Tibial artery (tissue), 4 donors: ENCODE measurements at regions of chr1 and their contacts with region 1.

Region 1: GRCh38 chr1:201447911-201448871 is 20.8 kb downstream of the PHLDA3 start:
- DNase-seq: peak; percentile 71 to 87
- H3K4me3 ChIP-seq: no peak overlapping the region
- H3K27ac ChIP-seq: no peak overlapping the region
- H3K4me1 ChIP-seq: peaks cover 0 to 25% (median 16%) of the 10 kb centered on the region in 4 donors
- H3K27me3 ChIP-seq: no peaks in the 10 kb centered on the region
- CTCF ChIP-seq: peak; percentile 86 to 87

Region 2: DNA sequence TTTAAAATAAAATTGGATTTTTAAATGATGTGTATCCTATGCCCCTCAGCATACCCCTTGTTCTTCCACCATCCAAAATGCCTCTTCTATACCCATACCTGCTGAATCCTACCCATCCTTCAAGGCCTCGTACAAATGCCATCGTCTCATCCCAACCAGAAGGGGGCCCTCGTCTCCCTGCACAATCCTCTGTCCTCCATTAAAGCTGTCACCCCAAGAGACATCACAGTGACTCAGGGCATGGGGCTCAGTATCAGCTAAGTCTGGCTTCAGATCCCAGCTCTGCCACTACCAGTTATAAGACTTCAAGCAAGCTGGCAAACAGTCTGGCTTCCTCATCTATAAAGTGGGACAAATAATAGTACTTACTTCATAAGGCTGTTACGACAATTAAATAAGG is 233.7 kb before region 1 on chr1:
- intact Hi-C with region 1: no loop called
- DNase-seq: peak in 1 of 2 donors; percentile 25
- H3K4me3 ChIP-seq: no peak overlapping the region
- H3K27ac ChIP-seq: no peak overlapping the region
- H3K4me1 ChIP-seq: no peaks in the 10 kb centered on the region
- H3K27me3 ChIP-seq: no peaks in the 10 kb centered on the region
- CTCF ChIP-seq: no peak

Region 3: GRCh38 chr1:201299968-201300367 is 148.2 kb before region 1 on chr1:
- intact Hi-C with region 1: no loop called
- DNase-seq: no peak
- H3K4me3 ChIP-seq: no peak overlapping the region
- H3K27ac ChIP-seq: no peak overlapping the region
- H3K4me1 ChIP-seq: peaks cover 0 to 17% (median 0%) of the 10 kb centered on the region in 4 donors
- H3K27me3 ChIP-seq: peaks cover 0 to 23% of the 10 kb centered on the region in 2 donors
- CTCF ChIP-seq: no peak

Region 4: GRCh38 chr1:201426479-201427310 is 21.5 kb before region 1 on chr1:
- intact Hi-C with region 1: no loop called
- DNase-seq: no peak
- H3K4me3 ChIP-seq: no peak overlapping the region
- H3K27ac ChIP-seq: no peak overlapping the region
- H3K4me1 ChIP-seq: no peaks in the 10 kb centered on the region
- H3K27me3 ChIP-seq: peaks cover 0 to 12% of the 10 kb centered on the region in 2 donors
- CTCF ChIP-seq: no peak

Region 5: GRCh38 chr1:201481761-201482493 is 33.7 kb after region 1 on chr1:
- intact Hi-C with region 1: loop called (anchors 5 kb)
- DNase-seq: peak; percentile 78 to 94
- H3K4me3 ChIP-seq: peak overlapping the region; percentile 39 to 47
- H3K27ac ChIP-seq: peak overlapping the region; percentile 93 to 97
- H3K4me1 ChIP-seq: peaks cover 0 to 53% (median 39%) of the 10 kb centered on the region in 4 donors
- H3K27me3 ChIP-seq: no peaks in the 10 kb centered on the region
- CTCF ChIP-seq: peak; percentile 89 to 98

Region 6: GRCh38 chr1:201511941-201512539 is 63.8 kb after region 1 on chr1:
- intact Hi-C with region 1: loop called (anchors 2 kb)
- DNase-seq: peak; percentile 61 to 84
- H3K4me3 ChIP-seq: no peak overlapping the region
- H3K27ac ChIP-seq: peak overlapping the region; percentile 57 to 65
- H3K4me1 ChIP-seq: peaks cover 0 to 42% (median 29%) of the 10 kb centered on the region in 4 donors
- H3K27me3 ChIP-seq: no peaks in the 10 kb centered on the region
- CTCF ChIP-seq: no peak

Region 7: GRCh38 chr1:201709564-201710295 is 261.5 kb after region 1 on chr1:
- intact Hi-C with region 1: loop called (anchors 10 kb)
- DNase-seq: peak; percentile 78 to 86
- H3K4me3 ChIP-seq: no peak overlapping the region
- H3K27ac ChIP-seq: peak overlapping the region; percentile 86 to 87
- H3K4me1 ChIP-seq: peaks cover 0 to 58% (median 50%) of the 10 kb centered on the region in 4 donors
- H3K27me3 ChIP-seq: no peaks in the 10 kb centered on the region
- CTCF ChIP-seq: peak; percentile 94 to 97